ENCODE measurements at regions of chr2 and their contacts with region 1.

Region 1: GRCh38 chr2:54704688-54705605 is 18.5 kb upstream of the EML6 start:
- DNase-seq: peak; percentile 77
- H3K4me3 Mint-ChIP-seq: no peak overlapping the region
- H3K27ac Mint-ChIP-seq: no peak overlapping the region
- H3K4me1 Mint-ChIP-seq: no peaks in the 10 kb centered on the region
- H3K27me3 Mint-ChIP-seq: no peaks in the 10 kb centered on the region
- CTCF ChIP-seq: peak; percentile 58

Region 2: DNA sequence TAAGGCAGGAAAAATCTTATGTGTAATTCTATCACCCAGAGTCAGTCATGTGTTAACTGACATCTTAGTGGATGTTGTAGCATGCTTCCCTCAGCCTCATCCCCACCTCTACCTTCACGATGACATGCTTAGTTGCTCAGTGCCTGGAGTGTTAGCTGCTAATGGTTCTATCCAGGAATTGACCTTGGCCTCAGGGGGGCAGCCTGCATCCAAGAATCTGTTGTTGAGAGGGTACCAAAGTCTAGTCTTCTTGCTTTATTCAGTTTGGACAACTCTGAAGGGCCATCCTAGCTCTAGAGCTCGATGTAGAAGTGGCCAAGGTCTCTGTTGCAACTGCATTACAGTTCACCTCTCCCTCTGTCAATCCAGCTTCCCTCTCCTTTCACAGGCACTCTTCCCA is 528.4 kb before region 1 on chr2:
- CTCF ChIA-PET with region 1: interaction called, 4 read pairs
- POLR2A ChIA-PET with region 1: no interaction called
- intact Hi-C with region 1: loop called (anchors 5 kb)
- DNase-seq: peak; percentile 40
- H3K4me3 Mint-ChIP-seq: no peak overlapping the region
- H3K27ac Mint-ChIP-seq: no peak overlapping the region
- H3K4me1 Mint-ChIP-seq: no peaks in the 10 kb centered on the region
- H3K27me3 Mint-ChIP-seq: no peaks in the 10 kb centered on the region
- CTCF ChIP-seq: peak; percentile 10

Region 3: DNA sequence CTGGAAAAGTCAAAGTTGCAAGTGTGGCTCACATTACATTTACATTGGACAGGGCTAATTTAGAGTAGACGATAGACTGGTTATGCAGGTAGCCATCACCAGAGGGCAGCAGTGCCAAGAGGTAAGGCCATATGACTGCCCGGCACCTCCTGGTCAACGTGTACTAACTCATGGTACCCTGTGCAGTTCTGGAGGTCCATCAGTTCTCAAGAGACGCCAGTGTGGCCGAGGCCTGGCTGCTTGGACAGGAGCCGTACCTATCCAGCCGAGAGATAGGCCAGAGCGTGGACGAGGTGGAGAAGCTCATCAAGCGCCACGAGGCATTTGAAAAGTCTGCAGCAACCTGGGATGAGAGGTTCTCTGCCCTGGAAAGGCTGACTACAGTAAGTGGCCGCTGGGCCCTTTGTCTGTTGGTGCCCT is 47.3 kb before region 1 on chr2:
- CTCF ChIA-PET with region 1: interaction called, 52 read pairs
- POLR2A ChIA-PET with region 1: interaction called, 3 read pairs
- intact Hi-C with region 1: loop called (anchors 1 kb)
- DNase-seq: peak; percentile 67
- H3K4me3 Mint-ChIP-seq: no peak overlapping the region
- H3K27ac Mint-ChIP-seq: no peak overlapping the region
- H3K4me1 Mint-ChIP-seq: no peaks in the 10 kb centered on the region
- H3K27me3 Mint-ChIP-seq: no peaks in the 10 kb centered on the region
- CTCF ChIP-seq: peak; percentile 61

Region 4: DNA sequence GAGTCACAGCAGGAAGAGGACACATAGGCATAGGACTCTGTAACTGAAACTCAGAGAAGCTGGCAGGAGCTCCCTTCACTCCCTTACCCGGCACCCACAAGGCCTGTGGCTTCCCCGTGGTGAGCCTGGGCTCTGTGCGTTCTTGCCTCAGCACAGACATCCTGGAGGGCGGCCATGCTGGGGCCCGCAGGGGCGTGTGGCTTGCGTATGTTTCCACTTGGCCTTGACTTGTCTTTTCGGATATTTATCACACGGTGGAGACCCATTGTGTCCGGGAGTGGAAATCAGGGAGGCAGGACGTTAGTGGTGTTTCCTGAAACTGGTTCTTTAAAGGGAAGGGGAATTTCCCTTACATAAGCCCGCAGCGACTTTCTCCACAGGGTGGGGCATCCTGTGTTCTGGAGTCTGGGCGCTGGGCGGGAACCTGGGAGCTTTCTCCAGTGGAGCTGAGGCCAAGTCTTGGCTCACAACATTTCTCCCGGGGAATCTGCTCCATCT is 31.4 kb before region 1 on chr2:
- CTCF ChIA-PET with region 1: interaction called, 24 read pairs
- POLR2A ChIA-PET with region 1: interaction called, 4 read pairs
- intact Hi-C with region 1: no loop called
- DNase-seq: peak; percentile 88
- H3K4me3 Mint-ChIP-seq: peak overlapping the region; percentile 59
- H3K27ac Mint-ChIP-seq: peak overlapping the region; percentile 90
- H3K4me1 Mint-ChIP-seq: peaks cover 40% of the 10 kb centered on the region
- H3K27me3 Mint-ChIP-seq: no peaks in the 10 kb centered on the region
- CTCF ChIP-seq: no peak

Region 5: DNA sequence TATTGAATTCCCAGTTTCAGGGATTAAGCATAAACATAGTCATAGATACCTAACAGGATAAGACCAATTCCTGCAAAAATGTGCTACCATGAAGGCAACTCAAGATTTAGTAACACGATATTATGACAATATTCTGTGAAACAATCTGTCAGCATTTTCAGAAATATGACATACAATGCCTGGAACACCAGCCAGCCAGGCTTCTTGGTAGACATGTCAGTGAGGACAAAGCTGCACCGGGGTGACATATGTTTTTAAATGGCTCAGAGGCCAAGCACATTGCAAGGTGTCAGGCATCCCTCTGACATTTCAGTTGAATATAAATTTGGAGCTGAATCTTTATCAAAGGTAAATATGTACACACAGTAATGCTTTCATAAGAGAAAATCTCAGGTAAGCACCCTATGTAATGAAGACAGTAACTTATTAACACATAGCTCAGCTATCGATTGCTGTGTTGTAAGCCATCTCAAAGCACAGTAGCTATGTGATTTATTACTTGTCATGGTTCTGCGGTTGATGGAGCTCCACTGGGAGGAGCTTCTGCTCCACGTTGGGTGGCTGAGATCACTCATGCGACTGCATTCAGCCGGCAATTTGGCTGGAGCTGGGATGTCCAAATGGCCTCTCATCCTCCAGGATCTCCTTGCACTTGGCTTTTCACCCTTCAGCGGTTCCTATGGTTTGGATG is 13.4 kb before region 1 on chr2:
- CTCF ChIA-PET with region 1: interaction called, 44 read pairs
- POLR2A ChIA-PET with region 1: no interaction called
- intact Hi-C with region 1: no loop called
- DNase-seq: no peak
- H3K4me3 Mint-ChIP-seq: no peak overlapping the region
- H3K27ac Mint-ChIP-seq: no peak overlapping the region
- H3K4me1 Mint-ChIP-seq: no peaks in the 10 kb centered on the region
- H3K27me3 Mint-ChIP-seq: no peaks in the 10 kb centered on the region
- CTCF ChIP-seq: no peak

Region 6: DNA sequence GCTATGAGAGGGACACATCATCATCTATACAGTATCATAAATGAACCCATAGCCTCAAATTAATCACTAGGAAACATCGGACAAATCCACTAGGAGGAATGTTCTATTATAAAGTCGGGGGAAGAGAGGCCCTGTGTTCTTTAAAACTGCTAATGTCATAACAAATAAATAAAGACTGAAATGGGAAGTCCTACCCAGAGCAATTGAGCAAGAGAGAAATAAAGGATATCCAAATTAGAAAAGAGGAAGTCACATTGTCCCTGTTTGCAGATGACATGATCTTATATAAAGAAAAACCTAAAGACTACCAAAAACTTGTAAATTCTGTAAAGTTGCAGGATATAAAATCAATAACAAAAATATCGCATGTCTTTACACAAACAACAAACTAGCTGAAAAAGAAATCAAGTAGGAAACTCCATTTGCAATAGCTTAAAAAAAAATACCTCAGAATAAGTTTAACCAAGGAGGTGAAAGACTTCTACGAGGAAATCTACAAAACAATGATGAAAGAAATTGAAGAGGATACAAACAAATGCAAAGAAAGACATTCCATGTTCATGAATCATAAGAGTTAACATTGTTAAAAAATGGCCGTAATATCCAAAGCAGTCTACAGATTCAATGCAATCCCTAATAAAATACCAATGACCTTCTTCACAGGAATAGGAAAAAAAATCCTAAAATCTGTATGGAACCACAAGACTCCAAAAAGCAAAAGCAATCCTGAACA is 314.7 kb after region 1 on chr2:
- CTCF ChIA-PET with region 1: no interaction called
- POLR2A ChIA-PET with region 1: no interaction called
- intact Hi-C with region 1: no loop called
- DNase-seq: no peak
- H3K4me3 Mint-ChIP-seq: no peak overlapping the region
- H3K27ac Mint-ChIP-seq: no peak overlapping the region
- H3K4me1 Mint-ChIP-seq: peaks cover 24% of the 10 kb centered on the region
- H3K27me3 Mint-ChIP-seq: no peaks in the 10 kb centered on the region
- CTCF ChIP-seq: no peak